ENCODE measurements at regions of chr17 and their contacts with region 1.

Region 1: DNA sequence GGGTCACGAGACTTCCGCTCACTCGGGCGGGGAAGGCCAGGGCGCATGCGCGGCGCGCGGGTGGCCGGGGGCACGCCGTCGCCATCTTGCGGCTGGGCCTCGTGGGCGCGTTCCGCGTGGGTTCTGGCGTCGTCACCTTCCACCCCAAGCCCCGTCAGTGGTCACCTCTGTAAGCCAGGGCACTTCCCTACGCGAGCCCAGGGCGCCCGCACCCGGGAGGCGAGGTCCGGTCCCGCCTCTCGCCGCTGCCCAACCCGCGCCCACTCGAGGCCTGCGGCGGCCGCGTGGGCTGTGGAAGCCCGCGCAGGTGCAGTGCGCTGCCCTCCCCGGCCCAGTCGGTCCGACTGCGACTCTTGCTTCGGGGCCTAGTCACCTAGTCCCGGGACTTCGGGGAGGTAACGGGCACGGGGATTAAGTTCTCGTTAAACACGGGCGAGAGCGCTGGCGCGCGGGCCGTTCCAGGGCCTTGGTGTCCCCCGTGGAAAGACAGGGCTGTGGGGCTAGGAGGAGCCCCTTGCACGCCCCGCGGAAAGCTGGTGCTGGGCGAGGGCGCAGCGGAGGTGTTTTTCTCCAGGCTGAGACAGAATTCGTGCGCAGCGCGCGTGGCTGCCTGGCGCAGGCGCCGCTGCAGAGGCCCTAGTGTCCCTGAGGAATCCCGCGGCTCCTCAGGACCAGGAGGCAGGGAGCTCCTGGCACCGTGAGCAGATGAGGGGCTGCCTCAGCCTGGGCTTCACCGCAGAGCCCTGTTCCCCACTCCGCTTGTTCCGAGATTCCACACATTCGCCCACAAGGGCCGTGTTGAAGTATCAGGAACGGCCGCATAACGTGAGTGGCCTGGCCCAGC is 472 bp upstream of the ARHGDIA start:
- DNase-seq: peak; percentile 96

Region 2: GRCh38 chr17:81733507-81734404 is 137.9 kb before region 1 on chr17:
- CTCF ChIA-PET with region 1: interaction called, 9 read pairs
- POLR2A ChIA-PET with region 1: interaction called, 11 read pairs
- DNase-seq: peak; percentile 95

Region 3: GRCh38 chr17:81860756-81861518 is 10.7 kb before region 1 on chr17:
- CTCF ChIA-PET with region 1: no interaction called
- POLR2A ChIA-PET with region 1: interaction called, 11 read pairs
- DNase-seq: peak; percentile 98

Region 4: GRCh38 chr17:81890447-81891299 is 19.1 kb after region 1 on chr17:
- CTCF ChIA-PET with region 1: interaction called, 5 read pairs
- POLR2A ChIA-PET with region 1: interaction called, 30 read pairs
- DNase-seq: peak; percentile 38

Region 5: DNA sequence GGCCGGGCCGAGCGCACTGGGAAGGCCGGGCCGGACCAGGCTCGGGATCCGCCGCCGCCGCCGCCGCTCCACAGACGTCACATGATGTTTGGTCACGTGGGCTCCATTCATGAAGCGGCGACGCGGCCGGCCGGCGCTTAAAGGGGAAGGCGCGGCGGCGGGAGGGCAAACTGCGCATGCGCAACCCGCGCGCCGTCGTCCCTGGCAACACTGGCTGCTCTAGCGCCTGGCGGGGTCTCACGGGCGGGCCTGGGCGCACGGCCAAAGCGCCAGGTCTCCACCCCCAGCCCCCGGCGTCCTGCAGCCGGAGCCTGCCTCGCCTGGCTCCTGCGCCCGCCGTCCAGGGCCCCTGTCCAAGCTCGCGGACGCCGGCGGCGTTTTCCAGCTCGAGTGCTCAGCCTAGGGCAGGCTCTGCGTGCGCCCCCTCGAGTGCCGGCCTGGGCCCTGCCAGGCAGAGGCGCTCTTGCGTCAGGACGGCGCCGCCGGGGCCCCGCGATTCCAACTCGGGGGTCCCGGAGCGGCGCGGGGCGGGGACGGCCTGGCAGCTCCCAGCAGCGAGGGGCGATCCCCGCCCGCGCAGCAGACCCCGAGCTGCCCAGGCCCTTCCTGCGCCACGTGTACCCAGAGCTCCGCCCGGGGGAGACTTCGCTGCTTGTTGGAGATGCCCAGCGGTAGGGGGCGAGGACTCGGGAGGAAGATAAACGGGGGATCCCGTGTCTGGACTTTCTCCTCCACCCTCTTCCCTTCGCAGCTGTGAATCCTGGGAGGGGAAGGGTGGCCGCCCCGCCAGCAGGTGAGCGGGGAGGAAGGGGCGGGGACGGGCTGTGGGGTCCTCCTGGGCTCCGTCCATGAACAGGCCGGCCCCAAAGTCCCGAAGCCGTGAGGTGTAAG is 56.3 kb after region 1 on chr17 and contains the start of gene MAFG:
- CTCF ChIA-PET with region 1: interaction called, 4 read pairs
- POLR2A ChIA-PET with region 1: interaction called, 26 read pairs
- DNase-seq: peak; percentile 98

Region 6: GRCh38 chr17:81994593-81995462 is 123.2 kb after region 1 on chr17:
- CTCF ChIA-PET with region 1: no interaction called
- POLR2A ChIA-PET with region 1: no interaction called
- DNase-seq: no peak